Activated CD4-positive, alpha-beta memory T cell treated with anti-CD3 and anti-CD28 coated beads for 36 hours (primary cell): ENCODE measurements at regions of chr2 and their contacts with region 1.

Region 1: GRCh38 chr2:50143822-50144575 is 887.9 kb downstream of the NRXN1 start:
- DNase-seq: no peak
- H3K4me3 Mint-ChIP-seq: peak overlapping the region; percentile 36
- H3K27ac Mint-ChIP-seq: no peak overlapping the region
- H3K4me1 Mint-ChIP-seq: no peaks in the 10 kb centered on the region
- H3K27me3 Mint-ChIP-seq: no peaks in the 10 kb centered on the region

Region 2: GRCh38 chr2:48600204-48600813 is 1543.7 kb before region 1 on chr2:
- CTCF ChIA-PET with region 1: no interaction called
- POLR2A ChIA-PET with region 1: no interaction called
- intact Hi-C with region 1: loop called (anchors 5 kb)
- DNase-seq: no peak
- H3K4me3 Mint-ChIP-seq: no peak overlapping the region
- H3K27ac Mint-ChIP-seq: no peak overlapping the region
- H3K4me1 Mint-ChIP-seq: no peaks in the 10 kb centered on the region
- H3K27me3 Mint-ChIP-seq: peaks cover 4% of the 10 kb centered on the region

Region 3: GRCh38 chr2:49687918-49688317 is 456.1 kb before region 1 on chr2:
- CTCF ChIA-PET with region 1: interaction called, 3 read pairs
- POLR2A ChIA-PET with region 1: no interaction called
- intact Hi-C with region 1: loop called (anchors 5 kb)
- DNase-seq: no peak
- H3K4me3 Mint-ChIP-seq: no peak overlapping the region
- H3K27ac Mint-ChIP-seq: no peak overlapping the region
- H3K4me1 Mint-ChIP-seq: no peaks in the 10 kb centered on the region
- H3K27me3 Mint-ChIP-seq: no peaks in the 10 kb centered on the region

Region 4: DNA sequence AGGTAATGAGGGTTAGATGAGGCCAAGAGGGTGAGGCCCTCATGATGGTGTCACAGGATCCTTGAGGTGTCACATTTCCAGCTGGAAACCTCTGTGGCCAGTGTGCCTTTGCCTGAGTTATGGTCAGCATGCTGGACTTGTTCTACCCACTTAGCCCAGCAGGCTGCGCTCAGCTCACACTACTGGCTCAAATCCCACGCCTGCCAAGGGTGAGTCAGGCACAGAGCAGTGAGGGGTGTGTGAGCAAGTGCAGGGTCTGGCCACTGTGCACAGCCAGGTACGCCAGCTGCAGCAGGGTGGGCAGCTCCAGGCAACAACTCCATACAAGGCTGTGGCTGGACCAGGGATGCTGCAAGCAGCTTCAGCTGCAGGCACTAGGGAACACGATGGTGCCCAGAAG is 373.1 kb before region 1 on chr2:
- CTCF ChIA-PET with region 1: interaction called, 3 read pairs
- POLR2A ChIA-PET with region 1: no interaction called
- intact Hi-C with region 1: loop called (anchors 10 kb)
- DNase-seq: no peak
- H3K4me3 Mint-ChIP-seq: no peak overlapping the region
- H3K27ac Mint-ChIP-seq: no peak overlapping the region
- H3K4me1 Mint-ChIP-seq: no peaks in the 10 kb centered on the region
- H3K27me3 Mint-ChIP-seq: no peaks in the 10 kb centered on the region

Region 5: DNA sequence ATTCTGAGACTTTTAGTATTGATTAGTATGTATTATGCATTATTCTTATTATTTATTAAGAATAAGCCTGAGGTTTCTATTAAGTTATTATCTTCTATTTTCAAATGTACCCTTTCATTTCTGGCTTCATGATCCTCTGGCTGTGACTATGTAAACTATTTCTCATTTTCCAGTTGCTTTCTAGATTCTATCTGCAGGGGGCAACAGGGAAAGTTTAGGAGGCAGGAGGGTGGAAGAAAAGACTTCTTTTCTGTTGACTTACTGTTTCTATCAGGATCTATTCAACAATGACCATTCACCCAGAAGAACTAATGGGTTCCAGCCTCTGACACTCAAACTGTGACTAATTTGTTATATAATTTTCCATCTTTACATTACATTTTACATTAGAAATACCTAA is 336.3 kb before region 1 on chr2:
- CTCF ChIA-PET with region 1: no interaction called
- POLR2A ChIA-PET with region 1: no interaction called
- intact Hi-C with region 1: no loop called
- DNase-seq: no peak
- H3K4me3 Mint-ChIP-seq: no peak overlapping the region
- H3K27ac Mint-ChIP-seq: no peak overlapping the region
- H3K4me1 Mint-ChIP-seq: no peaks in the 10 kb centered on the region
- H3K27me3 Mint-ChIP-seq: no peaks in the 10 kb centered on the region

Region 6: GRCh38 chr2:50492477-50492851 is 348.5 kb after region 1 on chr2:
- CTCF ChIA-PET with region 1: no interaction called
- POLR2A ChIA-PET with region 1: no interaction called
- intact Hi-C with region 1: loop called (anchors 2 kb)
- DNase-seq: peak; percentile 17
- H3K4me3 Mint-ChIP-seq: no peak overlapping the region
- H3K27ac Mint-ChIP-seq: no peak overlapping the region
- H3K4me1 Mint-ChIP-seq: peaks cover 18% of the 10 kb centered on the region
- H3K27me3 Mint-ChIP-seq: no peaks in the 10 kb centered on the region